ENCODE measurements at regions of chr6 and their contacts with region 1.

Region 1: DNA sequence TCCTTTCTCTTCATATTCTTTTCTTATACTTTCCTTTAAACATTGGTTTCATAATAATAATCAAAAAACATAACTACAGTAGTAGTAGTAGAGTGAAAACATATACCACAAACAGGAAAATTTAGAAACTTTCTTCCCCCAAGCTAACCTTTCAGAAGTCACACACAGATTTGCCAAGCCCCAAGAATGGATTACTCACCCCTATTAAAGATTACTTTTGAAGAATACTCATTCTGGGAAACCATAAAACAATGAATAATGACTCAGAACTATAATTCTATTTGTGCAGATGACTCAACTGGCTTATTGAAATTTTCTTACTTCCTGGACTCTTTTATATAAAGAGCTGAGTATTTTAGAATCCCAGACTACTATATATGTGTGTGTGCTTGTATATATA is 119.4 kb upstream of the GJE1 start:
- DNase-seq: no peak
- ATAC-seq: no peak
- H3K4me3 ChIP-seq: no peak overlapping the region
- H3K27ac ChIP-seq: no peak overlapping the region
- H3K4me1 ChIP-seq: no peaks in the 10 kb centered on the region
- H3K27me3 ChIP-seq: peaks cover 2 to 11% of the 10 kb centered on the region in 2 experiments; a peak in 1 of 5 replicates
- CTCF ChIP-seq: no peak
- EP300 ChIP-seq: no peak
- POLR2A ChIP-seq: no peak
- RAD21 ChIP-seq: no peak

Region 2: DNA sequence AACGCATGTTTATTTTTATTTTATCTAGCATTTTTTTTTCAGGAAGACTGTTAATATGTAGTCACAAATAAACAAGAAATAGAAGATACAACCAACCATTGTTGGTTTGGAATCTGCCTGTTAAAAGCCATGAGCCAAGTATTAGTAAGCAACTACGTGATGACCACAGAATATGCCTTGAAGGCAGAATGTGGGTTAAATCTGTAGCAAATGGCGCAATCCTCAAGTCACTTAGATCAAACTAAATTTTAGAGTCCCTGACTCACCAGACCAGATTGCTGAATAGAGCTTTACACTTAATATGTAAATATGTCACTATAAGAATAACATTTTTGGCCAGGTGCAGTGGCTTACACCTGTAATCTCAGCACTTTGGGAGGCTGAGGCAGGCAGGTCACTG is 1838.8 kb before region 1 on chr6:
- CTCF ChIA-PET with region 1: no interaction called
- POLR2A ChIA-PET with region 1: no interaction called
- in situ Hi-C with region 1: no loop called
- intact Hi-C with region 1: loop called (anchors 10 kb)
- DNase-seq: no peak
- ATAC-seq: no peak
- H3K4me3 ChIP-seq: no peak overlapping the region
- H3K27ac ChIP-seq: no peak overlapping the region
- H3K4me1 ChIP-seq: no peaks in the 10 kb centered on the region
- H3K27me3 ChIP-seq: no peaks in the 10 kb centered on the region
- CTCF ChIP-seq: no peak
- EP300 ChIP-seq: no peak
- POLR2A ChIP-seq: no peak
- RAD21 ChIP-seq: no peak

Region 3: GRCh38 chr6:141833001-141833655 is 180.2 kb before region 1 on chr6:
- CTCF ChIA-PET with region 1: no interaction called
- POLR2A ChIA-PET with region 1: no interaction called
- in situ Hi-C with region 1: no loop called
- intact Hi-C with region 1: no loop called
- DNase-seq: no peak
- ATAC-seq: peak; percentile 53; the same call in 2 of the 3 replicates
- H3K4me3 ChIP-seq: no peak overlapping the region
- H3K27ac ChIP-seq: no peak overlapping the region
- H3K4me1 ChIP-seq: no peaks in the 10 kb centered on the region
- H3K27me3 ChIP-seq: no peaks in the 10 kb centered on the region
- CTCF ChIP-seq: no peak
- EP300 ChIP-seq: no peak
- POLR2A ChIP-seq: no peak
- RAD21 ChIP-seq: no peak